ENCODE measurements at regions of chr6 and their contacts with region 1.

Region 1: DNA sequence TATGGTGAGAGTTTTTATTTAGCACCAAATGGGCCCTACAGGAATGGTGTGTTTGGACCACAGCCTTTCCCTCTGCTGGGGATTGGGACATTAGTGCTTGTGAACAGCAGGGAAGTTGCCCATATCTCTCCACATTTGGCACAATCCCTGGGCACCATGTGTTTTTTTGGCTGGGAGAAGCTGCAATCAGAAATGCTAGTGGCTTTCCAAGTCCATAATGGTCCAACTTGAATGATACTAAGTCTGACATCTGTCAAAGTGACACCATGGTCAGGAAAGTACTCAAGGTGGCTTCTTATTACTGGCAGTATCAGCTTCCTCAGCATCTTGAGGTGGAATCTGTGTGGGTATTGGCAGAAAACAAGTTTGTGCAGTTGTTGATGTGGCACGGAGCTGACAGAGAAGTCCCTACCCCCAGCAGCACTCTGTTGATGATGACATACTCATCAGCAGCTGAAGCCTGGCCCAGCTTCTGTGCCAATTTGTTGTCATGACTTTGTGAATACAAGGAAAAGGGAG is 53.0 kb downstream of the SASH1 start:
- DNase-seq: no peak
- H3K4me3 ChIP-seq: no peak overlapping the region
- H3K27me3 ChIP-seq: no peaks in the 10 kb centered on the region
- CTCF ChIP-seq: no peak

Region 2: GRCh38 chr6:148231572-148231971 is 164.1 kb before region 1 on chr6:
- CTCF ChIA-PET with region 1: no interaction called
- POLR2A ChIA-PET with region 1: interaction called, 15 read pairs
- DNase-seq: peak; percentile 76
- H3K4me3 ChIP-seq: no peak overlapping the region
- H3K27me3 ChIP-seq: no peaks in the 10 kb centered on the region
- CTCF ChIP-seq: no peak

Region 3: GRCh38 chr6:148379479-148379878 is 16.2 kb before region 1 on chr6:
- CTCF ChIA-PET with region 1: no interaction called
- POLR2A ChIA-PET with region 1: no interaction called
- DNase-seq: no peak
- H3K4me3 ChIP-seq: no peak overlapping the region
- H3K27me3 ChIP-seq: no peaks in the 10 kb centered on the region
- CTCF ChIP-seq: no peak

Region 4: GRCh38 chr6:148464319-148465010 is 68.8 kb after region 1 on chr6:
- CTCF ChIA-PET with region 1: no interaction called
- POLR2A ChIA-PET with region 1: interaction called, 12 read pairs
- DNase-seq: no peak
- H3K4me3 ChIP-seq: no peak overlapping the region
- H3K27me3 ChIP-seq: no peaks in the 10 kb centered on the region
- CTCF ChIP-seq: peak; percentile 88